ENCODE measurements at regions of chr2 and their contacts with region 1.

Region 1: DNA sequence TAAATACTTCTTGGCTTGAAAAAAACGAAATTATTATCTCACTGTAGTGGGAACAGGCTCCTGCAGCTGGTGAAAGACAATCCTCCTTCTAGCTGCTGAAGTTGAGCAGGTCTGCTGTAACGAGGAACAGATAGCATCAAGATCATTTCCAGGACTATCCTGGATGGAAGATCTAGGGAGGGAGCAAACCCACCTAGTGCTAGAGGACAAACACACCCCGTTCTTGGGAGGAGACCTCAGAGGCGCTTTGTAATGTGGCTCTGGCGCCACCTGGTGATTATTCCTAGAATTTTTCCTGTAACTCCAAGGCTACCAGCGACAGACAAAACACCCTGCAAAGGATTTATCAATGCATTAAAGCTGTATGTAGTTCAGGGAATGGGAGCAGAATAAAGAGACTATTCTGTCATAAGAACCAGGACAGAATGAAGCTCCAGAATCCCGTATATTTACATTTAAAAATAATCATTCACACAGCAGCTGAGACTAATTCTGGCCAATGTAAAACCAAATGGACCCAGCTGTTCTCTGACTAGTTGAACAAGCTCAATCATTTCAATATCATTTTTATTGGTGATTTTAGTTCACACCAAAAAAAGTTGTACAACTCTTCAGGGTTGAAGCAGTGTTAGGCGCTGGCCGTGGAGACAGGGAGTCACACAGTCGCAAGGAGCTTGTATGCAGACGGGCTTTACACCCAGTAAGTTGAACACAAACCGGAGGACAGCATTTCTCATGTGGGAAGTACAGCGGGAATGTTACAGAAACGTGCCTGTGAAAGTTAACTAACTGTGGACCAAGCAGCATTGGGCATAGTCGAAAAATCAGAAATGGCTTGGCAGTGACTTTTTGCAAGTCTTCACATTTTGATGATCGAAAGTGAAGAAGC is 290.3 kb downstream of the TRIB2 start:
- DNase-seq: peak; percentile 68
- H3K4me3 Mint-ChIP-seq: no peak overlapping the region
- H3K27ac Mint-ChIP-seq: no peak overlapping the region
- H3K4me1 Mint-ChIP-seq: peaks cover 2% of the 10 kb centered on the region
- H3K27me3 Mint-ChIP-seq: peaks cover 16% of the 10 kb centered on the region

Region 2: GRCh38 chr2:11863513-11864328 is 1143.4 kb before region 1 on chr2:
- CTCF ChIA-PET with region 1: interaction called, 16 read pairs
- POLR2A ChIA-PET with region 1: no interaction called
- DNase-seq: peak; percentile 67
- H3K4me3 Mint-ChIP-seq: no peak overlapping the region
- H3K27ac Mint-ChIP-seq: no peak overlapping the region
- H3K4me1 Mint-ChIP-seq: peaks cover 27% of the 10 kb centered on the region
- H3K27me3 Mint-ChIP-seq: peaks cover 9% of the 10 kb centered on the region

Region 3: DNA sequence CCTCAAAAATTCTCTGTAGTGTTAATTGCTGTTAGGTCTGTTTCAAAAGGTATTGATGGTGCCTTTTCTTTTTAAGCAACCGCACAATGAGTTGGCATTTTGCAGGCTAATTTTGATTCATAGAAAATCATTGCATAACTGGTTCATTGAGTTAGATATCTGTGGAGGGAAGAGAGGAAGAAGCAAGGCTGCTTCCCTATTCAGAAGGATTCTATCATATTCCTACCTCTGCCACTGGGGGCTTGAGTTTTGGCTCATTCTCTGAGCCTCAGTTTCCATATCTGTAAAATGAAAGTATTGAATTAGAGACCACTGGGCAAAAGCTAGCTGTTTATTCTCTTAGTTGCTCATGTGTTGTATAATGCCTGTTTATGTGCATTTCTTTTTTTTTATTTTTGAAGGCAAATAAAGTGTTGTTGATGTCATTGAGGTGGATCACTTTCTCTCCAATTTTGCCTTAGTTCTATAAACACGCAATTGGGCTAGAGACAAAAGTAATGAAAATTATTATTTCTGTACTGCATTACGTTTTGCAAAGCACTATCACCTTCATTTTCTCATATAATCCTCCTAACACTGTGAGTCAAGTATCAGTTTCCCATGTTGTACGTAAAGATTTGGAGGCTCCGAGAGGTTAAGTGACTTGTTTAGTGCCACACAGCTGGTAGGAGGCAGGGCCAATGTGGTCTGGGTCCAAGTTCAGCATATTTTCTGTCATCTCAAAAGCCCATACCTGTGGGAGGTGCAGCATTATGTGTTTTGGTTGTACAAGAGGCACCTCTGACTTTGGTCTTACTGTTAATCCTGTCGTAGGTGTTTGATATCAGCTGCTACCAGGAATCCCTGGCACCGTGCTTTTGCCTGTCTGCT is 284.4 kb before region 1 on chr2:
- CTCF ChIA-PET with region 1: interaction called, 42 read pairs
- POLR2A ChIA-PET with region 1: interaction called, 8 read pairs
- DNase-seq: no peak
- H3K4me3 Mint-ChIP-seq: peak overlapping the region; percentile 84
- H3K27ac Mint-ChIP-seq: no peak overlapping the region
- H3K4me1 Mint-ChIP-seq: peaks cover 87% of the 10 kb centered on the region
- H3K27me3 Mint-ChIP-seq: peaks cover 6% of the 10 kb centered on the region

Region 4: GRCh38 chr2:12931186-12931844 is 75.8 kb before region 1 on chr2:
- CTCF ChIA-PET with region 1: interaction called, 41 read pairs
- POLR2A ChIA-PET with region 1: no interaction called
- DNase-seq: no peak
- H3K4me3 Mint-ChIP-seq: no peak overlapping the region
- H3K27ac Mint-ChIP-seq: no peak overlapping the region
- H3K4me1 Mint-ChIP-seq: peaks cover 11% of the 10 kb centered on the region
- H3K27me3 Mint-ChIP-seq: peaks cover 21% of the 10 kb centered on the region

Region 5: DNA sequence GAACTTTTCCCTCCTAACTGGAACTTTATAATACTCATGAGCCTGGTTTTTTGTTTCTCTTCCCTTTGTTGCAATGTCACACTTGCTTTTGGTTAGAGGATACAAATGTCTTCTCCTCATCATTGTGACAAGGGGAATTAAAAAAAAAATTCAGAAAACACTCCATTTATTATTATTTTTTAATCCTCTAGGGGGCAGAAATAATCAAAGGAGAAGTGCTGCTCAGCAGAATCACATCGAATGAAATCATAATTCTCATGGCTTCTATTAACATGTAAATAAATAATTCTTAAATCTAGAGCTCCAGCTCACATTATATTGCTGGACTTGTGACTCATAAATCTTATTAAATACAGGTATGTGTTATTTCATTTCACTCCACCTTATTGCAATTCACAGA is 16.6 kb before region 1 on chr2:
- CTCF ChIA-PET with region 1: interaction called, 12 read pairs
- POLR2A ChIA-PET with region 1: no interaction called
- DNase-seq: no peak
- H3K4me3 Mint-ChIP-seq: no peak overlapping the region
- H3K27ac Mint-ChIP-seq: no peak overlapping the region
- H3K4me1 Mint-ChIP-seq: peaks cover 9% of the 10 kb centered on the region
- H3K27me3 Mint-ChIP-seq: peaks cover 3% of the 10 kb centered on the region

Region 6: DNA sequence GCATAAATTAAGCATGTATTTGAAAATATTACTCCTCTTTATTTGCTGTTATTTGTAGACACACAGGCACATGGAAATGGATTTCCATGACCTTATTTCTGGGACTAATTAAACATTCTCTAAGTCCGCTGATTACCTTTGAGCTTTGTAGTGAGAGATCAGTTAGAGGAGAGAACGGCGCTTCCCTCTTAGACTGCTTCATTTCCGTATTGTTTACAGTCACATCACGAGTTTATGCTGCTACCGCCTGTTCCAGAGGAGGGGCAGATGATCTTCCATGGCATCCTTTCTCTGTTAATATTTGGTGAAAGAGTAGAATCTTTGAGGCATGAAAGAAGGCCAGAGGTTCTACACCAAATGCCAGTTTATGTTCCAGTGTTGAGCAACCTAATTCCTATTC is 114.0 kb after region 1 on chr2:
- CTCF ChIA-PET with region 1: no interaction called
- POLR2A ChIA-PET with region 1: no interaction called
- DNase-seq: no peak
- H3K4me3 Mint-ChIP-seq: no peak overlapping the region
- H3K27ac Mint-ChIP-seq: no peak overlapping the region
- H3K4me1 Mint-ChIP-seq: no peaks in the 10 kb centered on the region
- H3K27me3 Mint-ChIP-seq: no peaks in the 10 kb centered on the region

Region 7: DNA sequence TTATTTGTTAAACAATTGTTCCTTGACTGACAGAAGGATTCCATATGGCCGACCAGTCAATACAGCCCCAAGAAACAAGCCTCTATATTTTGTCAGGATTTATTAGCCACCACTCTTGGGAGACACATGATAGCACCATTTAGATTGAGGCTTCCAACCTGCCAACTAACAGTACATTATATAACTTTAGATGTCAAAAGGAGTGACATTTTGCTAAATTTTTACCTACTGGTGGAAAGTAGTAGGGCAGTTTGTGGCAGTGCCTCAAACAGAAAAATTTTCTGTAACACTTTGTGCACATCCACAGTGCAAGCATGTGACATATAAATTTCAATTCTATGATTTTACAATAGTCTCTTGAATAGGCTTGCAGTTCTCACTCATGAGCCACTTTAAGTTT is 173.7 kb after region 1 on chr2:
- CTCF ChIA-PET with region 1: no interaction called
- POLR2A ChIA-PET with region 1: no interaction called
- DNase-seq: no peak
- H3K4me3 Mint-ChIP-seq: no peak overlapping the region
- H3K27ac Mint-ChIP-seq: no peak overlapping the region
- H3K4me1 Mint-ChIP-seq: no peaks in the 10 kb centered on the region
- H3K27me3 Mint-ChIP-seq: no peaks in the 10 kb centered on the region

Measured in activated CD4-positive, alpha-beta memory T cell treated with anti-CD3 and anti-CD28 coated beads, Interleukin-2, amount 10 ng/mL, durations not matched to agents 7 days and 5 days (primary cell).